PC-9 (cell line): ENCODE measurements at regions of chr2 and their contacts with region 1.

Region 1: DNA sequence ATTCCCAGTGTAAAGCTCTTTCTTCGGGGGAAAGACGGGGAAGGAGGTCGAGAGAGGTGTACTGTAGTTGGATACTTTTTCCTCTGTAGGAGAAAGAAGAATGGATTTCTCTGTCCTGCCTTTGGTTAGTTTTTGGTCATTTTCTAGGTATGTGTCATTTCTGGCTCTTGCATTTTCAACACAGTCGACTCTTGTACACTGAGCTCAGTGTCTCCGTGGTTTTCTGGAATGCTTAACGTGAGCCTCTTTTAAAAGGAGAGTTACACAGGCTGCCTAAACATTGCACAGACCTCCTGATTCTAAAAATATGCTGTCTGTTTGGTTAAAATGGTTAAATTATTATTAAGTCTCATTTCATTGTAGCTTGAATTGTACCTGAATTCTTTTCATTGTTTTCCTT is 21.8 kb upstream of the GLS start:
- DNase-seq: peak; percentile 4 to 50
- H3K4me3 ChIP-seq: no peak overlapping the region
- H3K27ac ChIP-seq: peak overlapping the region; percentile 67
- H3K4me1 ChIP-seq: peaks cover 26% of the 10 kb centered on the region
- H3K27me3 ChIP-seq: no peaks in the 10 kb centered on the region
- CTCF ChIP-seq: no peak

Region 2: GRCh38 chr2:190822043-190822442 is 36.8 kb before region 1 on chr2:
- CTCF ChIA-PET with region 1: no interaction called
- POLR2A ChIA-PET with region 1: interaction called, 10 read pairs
- intact Hi-C with region 1: no loop called
- DNase-seq: no peak
- H3K4me3 ChIP-seq: no peak overlapping the region
- H3K27ac ChIP-seq: 0 out of 2 replicates have a peak overlapping the region, but pooled peaks have one; percentile 29
- H3K4me1 ChIP-seq: peaks cover 6% of the 10 kb centered on the region; the same call in 1 of the 2 replicates
- H3K27me3 ChIP-seq: no peaks in the 10 kb centered on the region
- CTCF ChIP-seq: no peak